CD8-positive, alpha-beta memory T cell (primary cell): ENCODE measurements at regions of chr5 and their contacts with region 1.

Region 1: DNA sequence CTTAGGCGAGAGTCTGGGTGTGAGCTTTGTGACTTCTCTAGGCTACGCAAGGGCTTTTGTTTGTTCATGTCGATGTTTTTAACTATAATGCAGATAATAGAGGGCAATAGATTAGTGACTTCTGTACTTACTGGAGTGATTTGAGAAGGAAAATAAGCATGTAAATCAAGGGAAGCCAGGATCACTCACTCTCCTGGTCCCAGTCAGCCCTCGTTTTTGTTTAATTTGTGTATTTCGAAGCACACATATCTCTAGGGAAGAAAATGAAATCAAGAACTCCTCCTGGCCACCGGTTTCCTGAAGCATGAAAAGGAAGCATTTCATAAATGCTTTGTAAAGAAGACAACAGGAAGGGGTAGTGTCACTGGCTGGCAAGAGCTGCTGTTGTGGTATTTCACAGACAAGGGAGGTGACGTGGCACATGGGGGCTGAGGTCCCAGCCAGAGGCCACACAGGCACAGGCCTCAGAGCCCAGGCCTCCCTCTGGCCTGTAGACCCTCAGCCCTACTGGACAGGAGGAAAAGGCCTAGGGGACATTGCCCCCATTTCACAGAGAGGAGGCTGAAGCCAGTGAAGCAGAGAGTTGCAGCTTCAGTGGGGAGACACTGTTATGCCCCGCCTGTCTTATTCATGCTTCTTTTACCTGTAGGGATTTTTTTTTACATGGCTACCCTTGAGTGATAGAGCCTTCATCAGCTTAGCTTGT is 34.1 kb downstream of the IRF1 start:
- DNase-seq: peak; percentile 55 to 85 (median 78)
- H3K4me3 ChIP-seq: peak overlapping the region; percentile 47
- H3K4me3 Mint-ChIP-seq: peak overlapping the region; percentile 37 to 86 (median 81)
- H3K27ac ChIP-seq: peak overlapping the region; percentile 93
- H3K27ac Mint-ChIP-seq: peak overlapping the region; percentile 98 to 100 (median 100)
- H3K4me1 ChIP-seq: peaks cover 94% of the 10 kb centered on the region
- H3K4me1 Mint-ChIP-seq: peaks cover 92 to 97% (median 95%) of the 10 kb centered on the region in 3 donors
- H3K27me3 ChIP-seq: no peaks in the 10 kb centered on the region
- H3K27me3 Mint-ChIP-seq: peaks cover 0 to 2% of the 10 kb centered on the region in 2 donors

Region 2: GRCh38 chr5:132012371-132013005 is 444.0 kb before region 1 on chr5:
- CTCF ChIA-PET with region 1: no interaction called
- POLR2A ChIA-PET with region 1: no interaction called
- DNase-seq: no peak
- H3K4me3 ChIP-seq: no peak overlapping the region
- H3K4me3 Mint-ChIP-seq: peak overlapping the region; percentile 74 to 89 (median 78)
- H3K27ac ChIP-seq: no peak overlapping the region
- H3K27ac Mint-ChIP-seq: peak overlapping the region in 6 of 8 donors; percentile 32 to 77 (median 58)
- H3K4me1 ChIP-seq: peaks cover 14% of the 10 kb centered on the region
- H3K4me1 Mint-ChIP-seq: peaks cover 35 to 45% (median 44%) of the 10 kb centered on the region in 3 donors
- H3K27me3 ChIP-seq: peaks cover 3% of the 10 kb centered on the region
- H3K27me3 Mint-ChIP-seq: peaks cover 9 to 22% of the 10 kb centered on the region in 2 donors

Region 3: DNA sequence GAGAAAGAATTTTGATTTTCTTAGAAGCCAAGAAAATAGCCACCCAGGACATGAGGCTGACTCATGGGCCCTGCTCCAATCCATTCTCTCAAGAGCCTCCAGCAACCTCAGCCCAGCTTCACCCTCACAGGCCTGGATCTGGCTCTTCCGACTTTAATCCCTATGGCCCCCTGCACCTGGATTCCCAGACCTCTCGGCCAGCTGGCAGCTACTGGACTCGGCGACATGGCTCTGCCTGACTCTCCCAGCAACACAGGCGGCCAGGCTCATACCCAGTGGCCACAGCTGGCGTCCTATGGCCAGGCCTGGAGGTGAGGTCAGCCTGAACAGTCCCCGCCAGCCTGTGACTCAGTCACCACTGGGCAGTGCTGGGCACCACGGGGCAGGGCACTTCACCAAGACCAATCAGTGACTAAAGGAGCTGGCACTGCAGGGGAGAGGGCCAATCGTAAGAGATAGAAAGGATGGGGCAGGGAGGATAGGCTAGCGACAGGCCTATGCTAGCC is 205.2 kb before region 1 on chr5:
- CTCF ChIA-PET with region 1: no interaction called
- POLR2A ChIA-PET with region 1: no interaction called
- DNase-seq: no peak
- H3K4me3 ChIP-seq: no peak overlapping the region
- H3K4me3 Mint-ChIP-seq: no peak overlapping the region
- H3K27ac ChIP-seq: no peak overlapping the region
- H3K27ac Mint-ChIP-seq: no peak overlapping the region
- H3K4me1 ChIP-seq: no peaks in the 10 kb centered on the region
- H3K4me1 Mint-ChIP-seq: no peaks in the 10 kb centered on the region
- H3K27me3 ChIP-seq: no peaks in the 10 kb centered on the region
- H3K27me3 Mint-ChIP-seq: peaks cover 10 to 14% of the 10 kb centered on the region in 2 donors

Region 4: DNA sequence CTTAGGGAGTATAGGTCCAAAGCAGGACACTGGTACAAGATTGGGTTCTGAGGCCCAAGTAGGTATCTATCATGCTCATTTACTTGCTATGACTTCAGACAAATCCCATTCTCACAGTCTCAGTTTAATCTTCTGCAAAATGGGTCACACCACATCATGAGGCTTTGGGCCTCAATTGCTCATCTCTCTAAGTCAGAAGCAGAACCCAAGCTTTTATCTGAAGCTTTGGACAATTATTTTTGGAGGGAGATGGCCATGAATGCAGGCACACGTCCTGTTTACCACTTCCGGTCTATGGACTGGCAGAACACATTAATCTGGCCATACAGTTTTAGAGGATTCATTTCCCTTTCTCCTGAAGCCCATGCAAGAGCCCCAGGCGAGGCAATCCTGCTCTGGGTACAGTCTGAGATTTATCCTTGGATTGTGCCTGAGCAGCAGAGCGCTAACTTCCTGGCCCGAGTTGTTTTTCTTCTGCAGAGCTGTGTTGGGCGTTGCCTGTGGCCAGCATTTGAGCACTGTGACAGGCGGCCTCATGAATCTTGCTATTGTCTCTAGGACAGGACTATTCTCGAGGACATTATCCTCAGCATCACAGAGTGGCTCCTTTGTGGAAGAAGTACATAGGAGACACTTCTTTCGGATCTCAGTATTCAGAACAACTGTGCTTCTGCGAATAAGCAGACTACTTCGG is 146.2 kb before region 1 on chr5:
- CTCF ChIA-PET with region 1: no interaction called
- POLR2A ChIA-PET with region 1: no interaction called
- DNase-seq: no peak
- H3K4me3 ChIP-seq: no peak overlapping the region
- H3K4me3 Mint-ChIP-seq: no peak overlapping the region
- H3K27ac ChIP-seq: no peak overlapping the region
- H3K27ac Mint-ChIP-seq: peak overlapping the region in 1 of 8 donors; percentile 27
- H3K4me1 ChIP-seq: no peaks in the 10 kb centered on the region
- H3K4me1 Mint-ChIP-seq: no peaks in the 10 kb centered on the region
- H3K27me3 ChIP-seq: no peaks in the 10 kb centered on the region
- H3K27me3 Mint-ChIP-seq: peaks cover 0 to 2% of the 10 kb centered on the region in 2 donors

Region 5: GRCh38 chr5:132386644-132387286 is 69.7 kb before region 1 on chr5:
- CTCF ChIA-PET with region 1: interaction called, 21 read pairs
- POLR2A ChIA-PET with region 1: no interaction called
- DNase-seq: peak; percentile 60 to 86 (median 72)
- H3K4me3 ChIP-seq: no peak overlapping the region
- H3K4me3 Mint-ChIP-seq: peak overlapping the region in 1 of 7 donors; percentile 56
- H3K27ac ChIP-seq: no peak overlapping the region
- H3K27ac Mint-ChIP-seq: peak overlapping the region in 6 of 8 donors; percentile 7 to 85 (median 53)
- H3K4me1 ChIP-seq: peaks cover 19% of the 10 kb centered on the region
- H3K4me1 Mint-ChIP-seq: peaks cover 20 to 37% (median 23%) of the 10 kb centered on the region in 3 donors
- H3K27me3 ChIP-seq: no peaks in the 10 kb centered on the region
- H3K27me3 Mint-ChIP-seq: no peaks in the 10 kb centered on the region

Region 6: GRCh38 chr5:132419502-132420468 is 36.7 kb before region 1 on chr5:
- CTCF ChIA-PET with region 1: interaction called, 82 read pairs
- POLR2A ChIA-PET with region 1: interaction called, 85 read pairs
- DNase-seq: peak; percentile 42 to 77 (median 60)
- H3K4me3 ChIP-seq: no peak overlapping the region
- H3K4me3 Mint-ChIP-seq: peak overlapping the region; percentile 76 to 91 (median 78)
- H3K27ac ChIP-seq: peak overlapping the region; percentile 12
- H3K27ac Mint-ChIP-seq: peak overlapping the region; percentile 84 to 99 (median 98)
- H3K4me1 ChIP-seq: peaks cover 97% of the 10 kb centered on the region
- H3K4me1 Mint-ChIP-seq: peaks cover 90 to 98% (median 97%) of the 10 kb centered on the region in 3 donors
- H3K27me3 ChIP-seq: no peaks in the 10 kb centered on the region
- H3K27me3 Mint-ChIP-seq: no peaks in the 10 kb centered on the region

Region 7: DNA sequence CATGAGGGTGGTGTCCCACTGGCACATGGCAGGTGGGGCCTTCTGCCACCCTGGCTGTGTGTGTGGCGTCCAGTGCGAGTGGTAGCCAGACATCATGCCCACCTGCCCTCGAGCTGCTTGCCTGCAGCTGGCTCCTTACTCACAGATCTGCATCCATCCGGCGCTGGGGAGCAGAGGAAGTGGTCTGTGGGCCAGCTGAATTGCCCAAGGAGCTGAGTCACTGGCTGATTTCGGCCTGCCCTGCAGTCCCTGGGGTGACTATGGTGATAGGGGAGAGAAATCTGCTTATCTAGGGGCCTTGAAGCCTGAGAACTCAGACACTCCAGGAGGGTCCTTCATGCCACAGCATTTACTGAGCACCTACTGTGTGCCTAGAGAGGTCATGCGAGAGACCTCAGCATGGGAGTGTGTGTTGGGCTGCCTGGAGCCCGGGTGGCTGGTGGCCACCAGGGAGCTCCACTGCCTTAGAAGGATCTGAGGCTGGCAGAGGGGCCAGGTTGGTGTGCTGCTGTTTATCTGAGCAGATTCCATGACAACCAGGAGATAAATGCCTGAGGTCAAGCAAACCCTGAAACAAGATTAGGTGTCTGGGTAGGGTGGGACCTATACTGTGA is 29.8 kb before region 1 on chr5:
- CTCF ChIA-PET with region 1: interaction called, 82 read pairs
- POLR2A ChIA-PET with region 1: interaction called, 85 read pairs
- DNase-seq: peak; percentile 37 to 83 (median 52)
- H3K4me3 ChIP-seq: peak overlapping the region; percentile 57
- H3K4me3 Mint-ChIP-seq: peak overlapping the region; percentile 61 to 89 (median 79)
- H3K27ac ChIP-seq: peak overlapping the region; percentile 84
- H3K27ac Mint-ChIP-seq: peak overlapping the region; percentile 95 to 99 (median 98)
- H3K4me1 ChIP-seq: peaks cover 100% of the 10 kb centered on the region
- H3K4me1 Mint-ChIP-seq: peaks cover 96 to 98% (median 97%) of the 10 kb centered on the region in 3 donors
- H3K27me3 ChIP-seq: no peaks in the 10 kb centered on the region
- H3K27me3 Mint-ChIP-seq: no peaks in the 10 kb centered on the region

Region 8: DNA sequence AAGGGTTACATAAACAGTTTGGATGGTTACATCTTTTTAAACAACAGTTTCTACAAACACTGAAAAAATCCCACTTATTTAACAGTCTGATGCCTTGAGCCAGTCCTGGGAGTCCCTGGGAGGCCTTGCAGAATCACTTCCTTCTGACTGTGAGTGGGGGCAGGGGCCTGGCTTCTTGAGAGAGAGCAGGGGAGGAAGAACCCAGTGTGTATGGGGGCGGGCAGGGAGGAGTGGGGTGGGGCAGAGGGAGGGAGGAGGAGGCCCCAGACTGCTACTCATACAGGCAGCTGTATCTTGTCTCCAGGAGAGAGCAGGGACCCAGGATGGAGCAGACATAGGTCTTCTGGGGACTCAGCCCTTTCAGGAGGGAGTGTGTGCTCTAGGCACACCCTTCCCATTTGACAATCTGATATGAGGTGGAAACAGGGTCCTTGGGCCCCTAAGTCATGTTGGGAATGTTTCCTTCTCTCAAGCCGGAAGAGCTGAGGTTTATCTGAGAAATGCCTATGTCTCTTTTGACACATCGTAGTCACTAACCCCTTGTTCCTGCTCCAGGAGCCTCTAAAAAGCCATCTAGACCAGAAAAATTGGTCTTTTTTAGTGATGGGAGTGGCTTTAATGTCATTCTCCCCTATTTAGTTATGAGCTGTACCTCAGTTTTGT is 18.7 kb before region 1 on chr5:
- CTCF ChIA-PET with region 1: interaction called, 26 read pairs
- POLR2A ChIA-PET with region 1: interaction called, 47 read pairs
- DNase-seq: peak; percentile 35 to 82 (median 48)
- H3K4me3 ChIP-seq: peak overlapping the region; percentile 55
- H3K4me3 Mint-ChIP-seq: peak overlapping the region; percentile 62 to 86 (median 74)
- H3K27ac ChIP-seq: peak overlapping the region; percentile 45
- H3K27ac Mint-ChIP-seq: peak overlapping the region; percentile 89 to 98 (median 94)
- H3K4me1 ChIP-seq: peaks cover 95% of the 10 kb centered on the region
- H3K4me1 Mint-ChIP-seq: peaks cover 88 to 99% (median 95%) of the 10 kb centered on the region in 3 donors
- H3K27me3 ChIP-seq: no peaks in the 10 kb centered on the region
- H3K27me3 Mint-ChIP-seq: no peaks in the 10 kb centered on the region

Region 9: DNA sequence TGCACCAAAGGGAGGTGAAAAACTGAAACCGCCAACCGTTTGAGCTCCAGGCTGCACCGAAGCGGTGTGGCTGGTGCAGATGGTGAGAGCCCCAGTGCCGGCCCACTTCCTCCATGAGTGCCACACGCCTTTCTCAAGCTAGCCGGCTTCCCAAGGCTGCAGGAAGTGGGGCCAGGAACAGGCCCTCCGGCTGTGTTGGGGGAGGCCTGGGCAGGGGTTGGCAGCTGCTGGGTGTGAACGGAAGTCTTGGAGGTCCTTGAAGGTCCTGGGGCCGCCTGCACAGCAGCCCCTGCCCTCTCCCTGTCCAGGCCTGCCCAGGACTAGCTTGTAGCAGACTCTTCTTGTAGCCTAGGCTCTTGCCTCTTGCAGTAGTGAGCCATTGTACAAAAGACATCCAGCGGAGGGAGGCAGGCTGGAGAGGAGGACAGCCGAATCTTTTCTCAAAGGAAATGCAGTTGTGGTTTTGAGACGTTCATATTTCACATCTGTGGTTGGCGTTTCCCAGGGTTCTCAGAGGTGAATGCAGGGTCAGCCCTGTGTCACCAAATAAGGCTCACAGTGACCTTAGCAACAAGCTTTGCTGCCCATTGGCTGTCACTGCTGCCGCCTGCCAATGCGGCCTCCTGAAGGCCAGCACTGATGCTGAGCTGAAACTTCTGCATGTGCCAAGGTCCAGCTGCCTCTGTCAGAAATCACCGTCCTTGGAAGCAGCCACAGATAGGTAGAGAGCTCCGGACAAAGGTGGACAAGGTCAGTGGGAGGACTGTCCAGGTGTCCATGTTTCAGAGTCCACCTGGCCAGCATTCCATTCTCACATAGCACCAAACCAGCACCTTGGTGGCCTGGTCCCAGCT is 10.2 kb after region 1 on chr5:
- CTCF ChIA-PET with region 1: interaction called, 85 read pairs
- POLR2A ChIA-PET with region 1: interaction called, 182 read pairs
- DNase-seq: peak; percentile 63 to 88 (median 78)
- H3K4me3 ChIP-seq: peak overlapping the region; percentile 57
- H3K4me3 Mint-ChIP-seq: peak overlapping the region; percentile 72 to 92 (median 82)
- H3K27ac ChIP-seq: peak overlapping the region; percentile 64
- H3K27ac Mint-ChIP-seq: peak overlapping the region; percentile 87 to 100 (median 98)
- H3K4me1 ChIP-seq: peaks cover 95% of the 10 kb centered on the region
- H3K4me1 Mint-ChIP-seq: peaks cover 98 to 100% (median 99%) of the 10 kb centered on the region in 3 donors
- H3K27me3 ChIP-seq: no peaks in the 10 kb centered on the region
- H3K27me3 Mint-ChIP-seq: no peaks in the 10 kb centered on the region

Region 10: DNA sequence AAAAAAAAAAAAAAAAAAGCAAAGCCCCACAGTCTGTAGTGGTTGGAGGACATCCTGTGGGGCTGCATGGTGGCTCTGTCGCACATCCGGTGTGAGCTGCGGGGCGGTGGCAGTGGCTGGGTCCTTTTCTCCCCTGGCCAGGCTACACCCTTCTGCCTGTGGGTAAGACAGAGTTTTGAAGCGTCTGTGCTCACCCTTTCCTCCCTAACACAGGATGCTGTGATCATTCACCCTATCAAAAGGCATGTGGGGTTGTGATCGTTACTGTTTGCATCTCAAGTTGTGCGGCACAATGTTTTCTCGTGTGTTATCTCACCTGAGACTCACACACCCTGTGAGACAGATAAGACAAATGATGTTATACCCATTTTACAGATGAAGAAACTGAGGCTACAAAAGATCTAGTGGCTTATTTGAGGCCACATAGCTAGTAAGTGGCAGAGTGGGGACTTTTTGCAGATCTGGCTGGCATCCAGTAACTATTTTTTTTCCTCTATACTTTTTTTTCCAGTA is 16.6 kb after region 1 on chr5:
- CTCF ChIA-PET with region 1: interaction called, 55 read pairs
- POLR2A ChIA-PET with region 1: interaction called, 182 read pairs
- DNase-seq: peak; percentile 81 to 96 (median 89)
- H3K4me3 ChIP-seq: no peak overlapping the region
- H3K4me3 Mint-ChIP-seq: peak overlapping the region; percentile 39 to 86 (median 64)
- H3K27ac ChIP-seq: peak overlapping the region; percentile 62
- H3K27ac Mint-ChIP-seq: peak overlapping the region; percentile 93 to 99 (median 96)
- H3K4me1 ChIP-seq: peaks cover 86% of the 10 kb centered on the region
- H3K4me1 Mint-ChIP-seq: peaks cover 87 to 99% (median 97%) of the 10 kb centered on the region in 3 donors
- H3K27me3 ChIP-seq: no peaks in the 10 kb centered on the region
- H3K27me3 Mint-ChIP-seq: peaks cover 0 to 9% of the 10 kb centered on the region in 2 donors

Region 11: GRCh38 chr5:133895979-133896845 is 1439.8 kb after region 1 on chr5:
- CTCF ChIA-PET with region 1: no interaction called
- POLR2A ChIA-PET with region 1: no interaction called
- DNase-seq: no peak
- H3K4me3 ChIP-seq: no peak overlapping the region
- H3K4me3 Mint-ChIP-seq: no peak overlapping the region
- H3K27ac ChIP-seq: no peak overlapping the region
- H3K27ac Mint-ChIP-seq: no peak overlapping the region
- H3K4me1 ChIP-seq: no peaks in the 10 kb centered on the region
- H3K4me1 Mint-ChIP-seq: no peaks in the 10 kb centered on the region
- H3K27me3 ChIP-seq: no peaks in the 10 kb centered on the region
- H3K27me3 Mint-ChIP-seq: peaks cover 0 to 4% of the 10 kb centered on the region in 2 donors